OCI-LY7 (cell line): ENCODE measurements at regions of chr11 and their contacts with region 1.

Region 1: GRCh38 chr11:122215244-122215992 is 99.4 kb upstream of the BLID start:
- DNase-seq: peak; percentile 35
- H3K4me3 ChIP-seq: no peak overlapping the region
- H3K27ac ChIP-seq: no peak overlapping the region
- H3K4me1 ChIP-seq: no peaks in the 10 kb centered on the region
- CTCF ChIP-seq: peak; percentile 94

Region 2: DNA sequence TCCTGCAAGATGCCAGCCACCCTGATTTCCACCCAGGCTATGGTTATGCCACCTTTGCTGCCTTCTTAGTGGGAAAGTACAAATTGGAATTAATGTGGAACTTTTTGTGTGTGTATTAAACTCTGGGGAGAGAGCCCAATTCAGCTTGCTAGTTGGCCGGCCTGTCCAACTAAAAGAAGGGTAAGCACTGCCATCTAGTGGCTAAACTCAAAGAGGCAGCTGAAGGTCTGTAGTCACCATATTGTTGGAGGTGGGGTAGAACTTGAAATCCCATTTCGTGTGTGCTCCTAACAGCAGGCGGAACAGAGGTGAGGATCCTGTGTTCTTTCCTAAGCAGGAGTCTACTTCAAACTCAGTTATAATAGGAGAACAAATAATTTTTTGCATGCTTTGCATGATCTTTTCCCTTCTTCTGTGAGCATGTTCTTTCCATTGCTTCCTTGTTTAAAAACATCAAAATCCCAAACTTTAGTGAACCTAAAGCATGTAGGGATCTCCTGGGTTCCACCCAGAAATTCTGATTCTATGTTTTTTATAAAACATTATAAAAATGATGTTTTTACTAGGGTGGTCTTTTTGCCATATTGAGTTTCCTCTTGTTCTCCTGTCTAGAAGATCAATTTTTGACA is 623.9 kb before region 1 on chr11:
- CTCF ChIA-PET with region 1: no interaction called
- POLR2A ChIA-PET with region 1: no interaction called
- intact Hi-C with region 1: no loop called
- DNase-seq: peak; percentile 87
- H3K4me3 ChIP-seq: peak overlapping the region; percentile 66
- H3K27ac ChIP-seq: peak overlapping the region; percentile 98
- H3K4me1 ChIP-seq: peaks cover 69% of the 10 kb centered on the region
- CTCF ChIP-seq: peak; percentile 97

Region 3: GRCh38 chr11:122505304-122506006 is 290.0 kb after region 1 on chr11:
- CTCF ChIA-PET with region 1: no interaction called
- POLR2A ChIA-PET with region 1: no interaction called
- intact Hi-C with region 1: loop called (anchors 1 kb)
- DNase-seq: peak; percentile 46
- H3K4me3 ChIP-seq: no peak overlapping the region
- H3K27ac ChIP-seq: no peak overlapping the region
- H3K4me1 ChIP-seq: no peaks in the 10 kb centered on the region
- CTCF ChIP-seq: peak; percentile 85